ENCODE measurements at regions of chr11 and their contacts with region 1.

Region 1: DNA sequence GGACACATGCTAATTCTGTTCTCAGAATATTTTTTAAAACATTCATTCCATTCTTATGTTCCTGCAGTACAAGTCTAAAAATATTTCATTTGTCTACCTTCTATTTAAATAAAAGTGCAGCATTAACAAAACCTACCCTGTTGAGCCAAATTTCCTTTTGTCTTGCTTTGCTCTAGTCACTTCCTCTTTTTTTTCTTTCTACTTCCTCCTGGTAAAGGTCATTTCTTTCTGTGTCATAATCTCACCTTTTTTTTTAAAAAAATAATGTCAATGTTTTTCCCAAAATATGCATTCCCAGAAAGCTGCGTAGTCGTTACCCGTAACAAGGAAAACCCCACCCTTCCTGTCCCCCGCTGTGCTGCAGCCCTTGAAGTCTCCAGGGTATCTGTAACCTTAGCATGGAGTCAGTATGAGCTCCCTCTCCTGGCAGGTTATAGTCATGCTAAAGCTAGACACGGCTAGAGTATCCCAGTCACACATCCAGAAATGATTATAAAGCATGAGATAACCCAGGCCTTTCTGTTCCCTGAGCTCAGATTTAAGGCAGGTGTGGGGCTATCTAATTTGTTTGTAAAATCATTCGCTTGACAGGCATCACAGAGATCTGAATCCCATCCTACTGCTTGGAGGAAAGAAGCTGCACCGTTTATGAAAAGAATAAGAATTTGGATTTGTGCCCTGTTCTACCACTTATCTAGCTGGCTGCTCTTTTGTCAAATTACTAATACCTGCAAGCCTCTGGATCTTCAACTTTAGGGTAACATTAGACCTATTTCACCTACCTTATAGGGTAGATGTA is 51.1 kb upstream of the EED start:
- DNase-seq: peak; percentile 63 to 86 (median 70)
- ATAC-seq: peak; percentile 99
- H3K4me3 ChIP-seq: no peak overlapping the region
- H3K27ac ChIP-seq: peak overlapping the region in 3 of 4 donors; percentile 18 to 67 (median 25)
- H3K4me1 ChIP-seq: peaks cover 9% of the 10 kb centered on the region
- H3K27me3 ChIP-seq: no peaks in the 10 kb centered on the region
- CTCF ChIP-seq: peak; percentile 23 to 85 (median 81)
- POLR2A ChIP-seq: no peak

Region 2: DNA sequence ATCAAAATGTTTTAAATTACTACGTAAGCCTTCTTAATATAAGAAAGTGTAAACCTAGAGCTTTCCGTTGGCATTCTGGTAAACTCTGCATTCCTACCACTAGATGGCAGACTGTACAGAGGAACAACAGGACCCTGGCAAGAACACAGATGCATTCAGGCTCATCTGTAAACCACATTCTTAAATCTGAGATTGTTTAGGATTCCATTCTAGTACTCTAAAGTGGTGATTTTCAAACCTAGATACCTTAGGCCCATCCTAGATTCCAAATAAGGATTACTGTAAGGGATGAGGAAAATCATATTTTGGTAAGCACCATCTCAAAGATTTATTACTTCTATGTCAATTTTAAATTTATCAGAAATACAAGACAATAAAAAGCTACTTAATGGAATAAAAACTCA is 151.5 kb before region 1 on chr11:
- intact Hi-C with region 1: loop called (anchors 10 kb)
- DNase-seq: peak; percentile 70 to 85 (median 70)
- ATAC-seq: peak; percentile 91
- H3K4me3 ChIP-seq: no peak overlapping the region
- H3K27ac ChIP-seq: peak overlapping the region in 3 of 4 donors; percentile 27 to 61 (median 51)
- H3K4me1 ChIP-seq: peaks cover 51% of the 10 kb centered on the region
- H3K27me3 ChIP-seq: no peaks in the 10 kb centered on the region
- CTCF ChIP-seq: peak; percentile 73 to 94 (median 86)
- POLR2A ChIP-seq: no peak

Measured in body of pancreas (tissue), 4 donors.